ENCODE measurements at regions of chr9 and their contacts with region 1.

Region 1: GRCh38 chr9:88498880-88499279 is 36.1 kb upstream of the NXNL2 start:
- DNase-seq: peak in 1 of 42 donors; percentile 13

Region 2: DNA sequence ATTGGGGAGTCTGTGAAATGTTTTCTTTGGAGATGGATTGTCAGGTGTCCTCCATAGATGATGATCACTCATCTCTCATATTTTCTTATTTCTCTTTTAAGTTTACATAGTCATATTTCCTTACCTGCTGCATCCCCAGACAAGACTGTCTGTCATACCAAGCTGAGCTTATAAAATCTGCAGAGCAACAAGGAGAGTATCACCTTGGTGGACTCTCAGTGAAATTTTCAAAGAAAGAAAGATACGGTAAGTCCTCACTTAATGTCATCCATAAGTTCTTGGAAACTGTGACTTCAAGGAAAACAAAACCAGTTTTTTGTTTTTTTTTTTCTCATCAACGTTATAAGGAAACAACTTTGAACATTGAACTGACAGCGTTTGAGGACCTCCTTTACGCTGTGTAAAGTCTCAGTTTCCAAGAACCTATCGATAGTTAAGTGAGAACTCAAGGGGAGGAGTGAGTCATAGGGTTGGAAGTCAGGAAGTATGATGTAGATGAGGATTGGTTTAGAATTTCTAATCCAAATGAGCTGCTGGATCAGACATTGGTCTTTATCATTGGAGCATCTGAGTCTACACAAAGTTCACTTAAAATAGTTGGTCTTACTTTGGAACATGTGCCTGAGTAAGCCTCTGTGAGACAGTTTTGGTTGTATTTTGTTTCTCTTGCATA is 65.2 kb before region 1 on chr9:
- intact Hi-C with region 1: loop called (anchors 10 kb)
- DNase-seq: no peak

Region 3: GRCh38 chr9:88458716-88459465 is 40.0 kb before region 1 on chr9:
- intact Hi-C with region 1: no loop called
- DNase-seq: no peak

Region 4: DNA sequence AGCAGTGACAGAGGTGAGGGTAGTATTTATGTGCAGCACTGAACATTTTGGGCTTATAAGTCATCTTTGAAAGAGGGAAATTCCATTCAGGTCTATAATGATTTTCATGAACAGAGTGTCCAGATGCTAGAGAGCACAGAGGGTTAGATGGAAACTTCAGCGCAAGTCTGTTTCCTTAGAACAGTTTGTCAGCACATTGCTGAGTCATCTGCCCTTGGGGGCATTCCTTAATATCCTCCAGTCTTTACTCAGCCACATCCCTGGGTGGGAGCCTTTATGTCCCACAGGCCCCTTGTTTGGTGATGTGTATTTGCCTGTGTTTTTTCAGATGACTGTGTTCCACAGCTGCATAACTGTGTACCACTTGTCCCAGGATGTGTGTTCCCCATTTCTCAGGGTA is 353.9 kb after region 1 on chr9:
- intact Hi-C with region 1: no loop called
- DNase-seq: no peak

Measured in head of caudate nucleus (tissue), 42 donors.